Activated CD4-positive, alpha-beta T cell treated with anti-CD3 and anti-CD28 coated beads for 36 hours (primary cell): ENCODE measurements at regions of chr10 and their contacts with region 1.

Region 1: GRCh38 chr10:74826142-74827044 is at the start of gene KAT6B:
- DNase-seq: peak; percentile 100
- ATAC-seq: peak; percentile 89
- H3K4me3 Mint-ChIP-seq: peak within 1 kb of the TSS; percentile 88
- H3K27ac Mint-ChIP-seq: peak within 1 kb of the TSS; percentile 84
- H3K4me1 Mint-ChIP-seq: peaks cover 70% of the 10 kb centered on the region
- H3K27me3 Mint-ChIP-seq: no peaks in the 10 kb centered on the region
- total RNA-seq, gene KAT6B: 20.0 to 20.9 TPM

Region 2: DNA sequence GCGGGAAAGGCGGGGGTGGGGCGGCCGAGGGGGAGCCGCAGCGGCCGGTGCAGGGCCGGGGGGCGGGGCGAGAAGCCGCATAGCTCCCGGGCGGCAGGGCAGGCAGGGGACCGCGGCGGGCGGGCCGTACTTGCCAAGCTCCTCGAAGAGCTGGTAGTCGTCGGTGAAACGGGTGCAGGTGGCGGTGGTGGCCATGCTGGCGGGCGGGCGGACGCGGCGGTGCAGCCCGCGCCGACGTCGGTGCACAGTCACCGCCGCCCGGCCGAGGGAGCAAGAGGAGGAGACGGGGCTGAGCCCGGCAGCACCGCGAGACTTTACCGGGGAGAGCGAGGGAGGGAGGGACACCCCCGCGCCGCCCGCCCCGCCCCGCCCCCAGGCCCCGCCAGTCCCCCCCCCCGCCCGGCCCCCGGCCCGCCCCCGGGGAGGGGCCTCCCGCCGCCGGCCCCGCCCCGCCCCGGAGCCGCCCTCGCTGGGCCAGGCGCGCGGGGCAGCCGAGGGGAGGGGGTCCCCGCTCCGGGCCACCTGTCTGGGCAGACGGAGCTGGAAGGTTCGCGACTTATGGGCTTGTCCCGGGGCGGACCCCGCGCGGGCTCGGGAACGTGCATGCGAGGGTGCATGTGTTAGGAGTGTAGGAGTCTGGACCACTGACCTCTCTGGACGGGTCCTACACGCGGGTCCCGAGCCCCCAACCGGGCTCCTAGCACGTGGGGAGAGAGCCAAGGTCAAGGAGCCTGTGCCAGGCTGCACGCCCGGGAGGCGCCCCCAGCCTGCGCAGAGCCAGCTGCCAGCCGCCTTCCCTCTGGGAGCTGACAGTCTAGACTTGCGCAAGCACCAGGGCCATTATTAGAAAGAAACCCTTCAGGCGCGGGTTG is 951.9 kb before region 1 on chr10 and contains the start of gene CAMK2G:
- CTCF ChIA-PET with region 1: no interaction called
- POLR2A ChIA-PET with region 1: no interaction called
- intact Hi-C with region 1: loop called in 1 of 2 experiments (anchors 1 kb)
- DNase-seq: peak; percentile 92
- ATAC-seq: peak; percentile 87
- H3K4me3 Mint-ChIP-seq: peak within 1 kb of the TSS; percentile 74
- H3K27ac Mint-ChIP-seq: peak within 1 kb of the TSS; percentile 81
- H3K4me1 Mint-ChIP-seq: peaks cover 67% of the 10 kb centered on the region
- H3K27me3 Mint-ChIP-seq: no peaks in the 10 kb centered on the region
- total RNA-seq, gene CAMK2G: 16.4 to 19.4 TPM

Region 3: GRCh38 chr10:73887038-73888015 is 939.1 kb before region 1 on chr10:
- CTCF ChIA-PET with region 1: no interaction called
- POLR2A ChIA-PET with region 1: no interaction called
- intact Hi-C with region 1: no loop called
- DNase-seq: no peak
- ATAC-seq: no peak
- H3K4me3 Mint-ChIP-seq: no peak overlapping the region
- H3K27ac Mint-ChIP-seq: no peak overlapping the region
- H3K4me1 Mint-ChIP-seq: peaks cover 9% of the 10 kb centered on the region
- H3K27me3 Mint-ChIP-seq: no peaks in the 10 kb centered on the region

Region 4: GRCh38 chr10:74262856-74263255 is 563.5 kb before region 1 on chr10:
- CTCF ChIA-PET with region 1: no interaction called
- POLR2A ChIA-PET with region 1: no interaction called
- intact Hi-C with region 1: loop called (anchors 5 to 10 kb)
- DNase-seq: no peak
- ATAC-seq: no peak
- H3K4me3 Mint-ChIP-seq: no peak overlapping the region
- H3K27ac Mint-ChIP-seq: no peak overlapping the region
- H3K4me1 Mint-ChIP-seq: peaks cover 17% of the 10 kb centered on the region
- H3K27me3 Mint-ChIP-seq: no peaks in the 10 kb centered on the region

Region 5: GRCh38 chr10:74855027-74855426 is 28.6 kb after region 1 on chr10:
- CTCF ChIA-PET with region 1: no interaction called
- POLR2A ChIA-PET with region 1: interaction called, 3 read pairs
- intact Hi-C with region 1: loop called (anchors 1 kb)
- DNase-seq: peak; percentile 19
- ATAC-seq: peak; percentile 40
- H3K4me3 Mint-ChIP-seq: peak overlapping the region; percentile 42
- H3K27ac Mint-ChIP-seq: peak overlapping the region; percentile 84
- H3K4me1 Mint-ChIP-seq: peaks cover 44% of the 10 kb centered on the region
- H3K27me3 Mint-ChIP-seq: no peaks in the 10 kb centered on the region

Region 6: GRCh38 chr10:75035975-75036708 is 209.7 kb after region 1 on chr10:
- CTCF ChIA-PET with region 1: no interaction called
- POLR2A ChIA-PET with region 1: no interaction called
- intact Hi-C with region 1: loop called in 1 of 2 experiments (anchors 1 kb)
- DNase-seq: peak; percentile 55
- ATAC-seq: peak; percentile 43
- H3K4me3 Mint-ChIP-seq: no peak overlapping the region
- H3K27ac Mint-ChIP-seq: peak overlapping the region; percentile 82
- H3K4me1 Mint-ChIP-seq: peaks cover 64% of the 10 kb centered on the region
- H3K27me3 Mint-ChIP-seq: no peaks in the 10 kb centered on the region

Region 7: DNA sequence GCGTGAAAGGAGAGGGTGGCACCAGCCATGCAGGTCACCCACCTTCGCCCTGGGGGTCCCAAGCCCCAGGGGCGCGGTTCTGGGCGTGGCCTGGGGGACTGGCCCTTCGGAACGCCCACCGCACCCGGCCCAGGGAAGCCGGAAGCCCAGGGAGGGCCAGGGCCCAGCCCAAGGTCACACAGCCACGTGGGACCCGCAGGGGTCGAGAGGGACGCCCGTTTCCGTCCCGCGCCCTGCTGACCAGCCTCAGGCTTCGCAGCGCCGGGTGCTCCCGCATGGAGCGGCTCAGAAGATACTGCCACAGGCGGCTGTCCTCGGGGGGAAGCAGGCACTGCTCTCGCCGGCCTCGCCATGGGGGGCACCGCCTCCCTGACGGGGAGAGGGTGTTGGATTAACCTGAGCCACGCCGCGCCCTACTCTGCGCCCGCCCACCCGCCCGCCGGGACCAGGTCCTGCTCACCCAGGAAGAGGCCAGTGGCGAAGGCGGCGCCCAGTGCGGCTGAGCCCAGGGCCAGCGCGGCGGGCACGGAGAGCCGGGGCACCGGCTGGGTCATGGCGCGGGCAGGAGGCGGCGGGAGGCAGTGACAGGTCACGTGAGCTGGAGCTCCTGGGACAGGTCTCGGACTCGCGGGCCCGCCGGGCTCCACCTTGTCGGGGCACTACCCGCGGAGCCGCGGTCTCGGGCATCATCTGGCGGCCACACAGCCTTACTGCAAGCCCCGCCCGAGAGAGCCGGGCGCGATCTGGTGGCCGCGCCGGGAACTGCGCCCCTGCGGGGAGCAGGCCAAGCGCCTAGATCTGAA is 409.2 kb after region 1 on chr10 and contains the start of gene COMTD1:
- CTCF ChIA-PET with region 1: interaction called, 3 read pairs
- POLR2A ChIA-PET with region 1: interaction called, 8 read pairs
- intact Hi-C with region 1: loop called (anchors 1 kb)
- DNase-seq: peak; percentile 98
- ATAC-seq: peak; percentile 76
- H3K4me3 Mint-ChIP-seq: peak within 1 kb of the TSS; percentile 79
- H3K27ac Mint-ChIP-seq: peak within 1 kb of the TSS; percentile 89
- H3K4me1 Mint-ChIP-seq: peaks cover 31% of the 10 kb centered on the region
- H3K27me3 Mint-ChIP-seq: no peaks in the 10 kb centered on the region
- total RNA-seq, gene COMTD1: 28.1 to 41.0 TPM